ENCODE measurements at regions of chr2 and their contacts with region 1.

Region 1: GRCh38 chr2:69306822-69307578 is 80.0 kb downstream of the GFPT1 start:
- DNase-seq: peak; percentile 36
- ATAC-seq: peak; percentile 88
- H3K4me3 ChIP-seq: peak overlapping the region; percentile 56 to 84
- H3K27ac ChIP-seq: peak overlapping the region; percentile 84
- H3K4me1 ChIP-seq: peaks cover 27% of the 10 kb centered on the region
- H3K27me3 ChIP-seq: no peaks in the 10 kb centered on the region
- CTCF ChIP-seq: peak; percentile 97

Region 2: GRCh38 chr2:68734688-68735525 is 572.1 kb before region 1 on chr2 and contains the start of gene ARHGAP25:
- CTCF ChIA-PET with region 1: no interaction called
- POLR2A ChIA-PET with region 1: no interaction called
- in situ Hi-C with region 1: no loop called
- intact Hi-C with region 1: no loop called
- DNase-seq: no peak
- ATAC-seq: no peak
- H3K4me3 ChIP-seq: no peak within 1 kb of the TSS
- H3K27ac ChIP-seq: no peak within 1 kb of the TSS
- H3K4me1 ChIP-seq: no peaks in the 10 kb centered on the region
- H3K27me3 ChIP-seq: no peaks in the 10 kb centered on the region
- CTCF ChIP-seq: no peak
- total RNA-seq, gene ARHGAP25: 0.49 TPM

Region 3: DNA sequence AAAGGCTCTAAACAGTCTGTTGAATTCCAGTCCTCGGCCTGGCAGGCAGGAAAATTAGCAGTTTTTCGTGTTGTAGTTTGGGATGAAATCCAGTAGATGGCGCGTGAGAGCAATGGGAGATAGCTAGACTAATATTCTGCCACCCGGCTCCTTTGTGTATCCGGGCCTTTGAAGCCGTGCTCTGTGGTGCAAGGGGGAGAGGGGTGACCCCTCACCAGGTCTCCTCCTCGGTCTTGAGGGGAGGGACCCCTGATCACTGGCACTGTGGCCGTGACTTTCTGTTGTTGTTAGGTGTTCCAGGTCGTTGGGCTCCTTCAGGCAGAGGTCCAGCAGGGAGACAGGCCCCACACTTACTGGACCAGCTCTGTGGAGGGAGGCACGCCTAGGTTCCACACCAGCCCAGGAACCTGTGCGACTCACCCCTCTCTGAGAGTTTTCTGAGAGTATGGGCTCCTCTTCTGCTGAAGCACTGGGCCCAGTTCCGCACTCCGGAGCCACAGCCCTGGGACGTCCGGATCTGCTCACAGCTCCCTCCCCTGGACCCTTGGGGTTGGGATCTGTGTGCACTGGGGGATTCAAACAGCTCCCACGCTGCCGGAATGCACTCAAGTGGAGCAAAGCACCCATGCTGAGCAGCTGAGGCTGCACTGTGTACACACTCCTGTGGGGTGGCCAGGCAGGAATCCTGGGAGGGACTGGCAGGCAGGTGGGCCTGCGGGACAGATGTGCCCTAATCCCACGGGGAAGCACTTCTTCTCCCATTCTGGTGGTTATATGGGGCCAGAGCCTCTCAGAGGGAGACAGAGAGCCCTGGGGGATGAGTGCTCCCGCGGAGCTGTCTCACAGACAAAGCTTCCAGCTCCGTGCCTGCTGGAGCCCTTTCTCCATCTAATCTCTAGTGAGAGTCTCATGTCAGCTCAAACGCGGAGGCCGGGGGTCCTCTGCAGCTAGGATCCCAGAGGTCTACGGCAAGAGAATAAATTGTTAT is 363.1 kb before region 1 on chr2:
- CTCF ChIA-PET with region 1: interaction called, 5 read pairs
- POLR2A ChIA-PET with region 1: no interaction called
- in situ Hi-C with region 1: no loop called
- intact Hi-C with region 1: loop called (anchors 1 kb)
- DNase-seq: peak; percentile 52
- ATAC-seq: peak; percentile 93
- H3K4me3 ChIP-seq: no peak overlapping the region
- H3K27ac ChIP-seq: peak overlapping the region; percentile 67
- H3K4me1 ChIP-seq: peaks cover 4% of the 10 kb centered on the region; the same call in 1 of the 2 replicates
- H3K27me3 ChIP-seq: no peaks in the 10 kb centered on the region
- CTCF ChIP-seq: peak; percentile 92

Region 4: GRCh38 chr2:69012310-69013141 is 294.5 kb before region 1 on chr2:
- CTCF ChIA-PET with region 1: interaction called, 6 read pairs
- POLR2A ChIA-PET with region 1: no interaction called
- in situ Hi-C with region 1: no loop called
- intact Hi-C with region 1: loop called (anchors 2 kb)
- DNase-seq: no peak
- ATAC-seq: peak; percentile 64
- H3K4me3 ChIP-seq: peak overlapping the region; percentile 85 to 98
- H3K27ac ChIP-seq: peak overlapping the region; percentile 96
- H3K4me1 ChIP-seq: peaks cover 25% of the 10 kb centered on the region
- H3K27me3 ChIP-seq: no peaks in the 10 kb centered on the region
- CTCF ChIP-seq: peak; percentile 88

Region 5: GRCh38 chr2:69253611-69254288 is 53.2 kb before region 1 on chr2:
- CTCF ChIA-PET with region 1: no interaction called
- POLR2A ChIA-PET with region 1: interaction called, 15 read pairs
- in situ Hi-C with region 1: no loop called
- intact Hi-C with region 1: no loop called
- DNase-seq: peak; percentile 98
- ATAC-seq: peak; percentile 97
- H3K4me3 ChIP-seq: no peak overlapping the region
- H3K27ac ChIP-seq: peak overlapping the region; percentile 96
- H3K4me1 ChIP-seq: peaks cover 26% of the 10 kb centered on the region
- H3K27me3 ChIP-seq: no peaks in the 10 kb centered on the region
- CTCF ChIP-seq: no peak

Measured in Panc1 (cell line).